Activated CD8-positive, alpha-beta T cell treated with anti-CD3 and anti-CD28 coated beads for 36 hours (primary cell): ENCODE measurements at regions of chr17 and their contacts with region 1.

Region 1: DNA sequence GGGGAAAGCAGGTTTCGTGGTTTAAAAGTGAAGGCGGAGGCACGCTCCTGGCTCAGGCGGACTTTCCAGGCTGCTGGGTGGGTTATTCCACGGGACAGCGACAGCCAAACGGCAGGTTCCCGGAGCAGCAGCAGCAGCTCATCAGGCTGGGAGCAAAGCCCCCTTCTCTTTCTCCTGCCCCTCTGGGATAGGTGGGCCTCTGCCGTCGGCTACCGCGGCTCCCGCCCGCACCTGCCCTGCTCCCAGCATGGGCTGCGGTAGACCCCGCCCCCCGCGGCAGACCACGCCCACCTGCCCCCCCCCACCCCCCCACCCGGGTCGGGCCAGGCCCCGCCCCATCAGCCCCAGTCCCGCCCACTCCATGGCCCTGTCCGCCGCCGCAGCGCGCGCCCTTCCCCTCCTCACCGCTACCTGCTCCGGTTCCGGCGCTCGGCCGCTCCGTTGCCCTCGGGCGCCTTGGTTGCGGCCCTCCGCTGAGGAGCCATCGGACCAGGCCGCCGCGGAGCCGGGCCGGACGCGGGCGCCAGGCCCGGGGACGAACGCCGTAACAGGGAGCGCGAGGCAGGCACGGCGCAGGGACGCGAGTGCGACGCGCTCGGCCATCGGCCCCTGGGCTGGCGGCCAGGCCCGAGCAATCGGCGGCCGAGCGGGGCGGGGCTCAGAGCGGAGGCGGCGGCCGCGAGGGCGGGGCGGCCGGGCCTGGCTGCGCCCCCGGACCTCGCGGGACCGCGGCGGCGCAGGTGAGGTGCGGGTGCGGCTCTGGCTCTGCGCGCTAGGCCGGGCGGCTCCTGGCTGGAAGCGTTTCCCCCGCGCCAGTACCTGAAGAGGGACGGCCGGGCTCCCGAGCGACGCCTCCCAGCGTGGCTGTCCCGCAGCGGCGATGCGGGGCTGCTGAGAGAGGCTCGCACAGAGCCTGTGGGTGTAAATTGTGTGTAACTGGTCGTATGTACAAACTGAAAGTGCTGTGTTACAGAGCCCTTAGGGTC is at the starts of genes HEXD and OGFOD3:
- DNase-seq: peak; percentile 82
- ATAC-seq: peak; percentile 91
- H3K4me3 Mint-ChIP-seq: peak within 1 kb of the TSS; percentile 78
- H3K27ac Mint-ChIP-seq: peak within 1 kb of the TSS; percentile 57
- H3K4me1 Mint-ChIP-seq: peaks cover 27% of the 10 kb centered on the region
- H3K27me3 Mint-ChIP-seq: no peaks in the 10 kb centered on the region
- CTCF ChIP-seq: no peak
- total RNA-seq, gene HEXD: 21.8 to 21.9 TPM
- total RNA-seq, gene OGFOD3: 22.0 to 25.0 TPM

Region 2: GRCh38 chr17:82320956-82321927 is 97.1 kb before region 1 on chr17:
- CTCF ChIA-PET with region 1: no interaction called
- POLR2A ChIA-PET with region 1: no interaction called
- intact Hi-C with region 1: no loop called
- DNase-seq: peak; percentile 96
- ATAC-seq: peak; percentile 24
- H3K4me3 Mint-ChIP-seq: peak overlapping the region; percentile 83
- H3K27ac Mint-ChIP-seq: peak overlapping the region; percentile 98
- H3K4me1 Mint-ChIP-seq: peaks cover 32% of the 10 kb centered on the region
- H3K27me3 Mint-ChIP-seq: no peaks in the 10 kb centered on the region
- CTCF ChIP-seq: peak; percentile 100

Region 3: GRCh38 chr17:82450170-82451106 is 32.1 kb after region 1 on chr17 and contains the start of gene CYBC1:
- CTCF ChIA-PET with region 1: interaction called, 4 read pairs
- POLR2A ChIA-PET with region 1: interaction called, 20 read pairs
- intact Hi-C with region 1: no loop called
- DNase-seq: peak; percentile 96
- ATAC-seq: peak; percentile 72
- H3K4me3 Mint-ChIP-seq: peak within 1 kb of the TSS; percentile 99
- H3K27ac Mint-ChIP-seq: peak within 1 kb of the TSS; percentile 100
- H3K4me1 Mint-ChIP-seq: peaks cover 27% of the 10 kb centered on the region
- H3K27me3 Mint-ChIP-seq: no peaks in the 10 kb centered on the region
- CTCF ChIP-seq: no peak
- total RNA-seq, gene CYBC1: 189 to 192 TPM

Region 4: GRCh38 chr17:82548681-82549303 is 130.5 kb after region 1 on chr17:
- CTCF ChIA-PET with region 1: no interaction called
- POLR2A ChIA-PET with region 1: no interaction called
- intact Hi-C with region 1: no loop called
- DNase-seq: peak; percentile 28
- ATAC-seq: no peak
- H3K4me3 Mint-ChIP-seq: no peak overlapping the region
- H3K27ac Mint-ChIP-seq: peak overlapping the region; percentile 42
- H3K4me1 Mint-ChIP-seq: peaks cover 46% of the 10 kb centered on the region
- H3K27me3 Mint-ChIP-seq: no peaks in the 10 kb centered on the region
- CTCF ChIP-seq: no peak